GM13976 (cell line): ENCODE measurements at regions of chr9 and their contacts with region 1.

Region 1: GRCh38 chr9:35476596-35476995 is 13.3 kb upstream of the RUSC2 start:
- DNase-seq: no peak
- CTCF ChIP-seq: no peak

Region 2: GRCh38 chr9:35116898-35117551 is 359.6 kb before region 1 on chr9:
- in situ Hi-C with region 1: loop called (anchors 5 kb)
- DNase-seq: peak; percentile 86
- CTCF ChIP-seq: peak; percentile 94

Region 3: GRCh38 chr9:35203528-35203927 is 273.1 kb before region 1 on chr9:
- in situ Hi-C with region 1: no loop called
- DNase-seq: no peak
- CTCF ChIP-seq: no peak